ENCODE measurements at regions of chr6 and their contacts with region 1.

Region 1: GRCh38 chr6:90251295-90251992 is 45.2 kb downstream of the BACH2 start:
- DNase-seq: no peak
- H3K4me3 Mint-ChIP-seq: peak overlapping the region; percentile 34
- H3K27ac Mint-ChIP-seq: peak overlapping the region; percentile 90
- H3K4me1 Mint-ChIP-seq: peaks cover 84% of the 10 kb centered on the region
- H3K27me3 Mint-ChIP-seq: peaks cover 2% of the 10 kb centered on the region

Region 2: DNA sequence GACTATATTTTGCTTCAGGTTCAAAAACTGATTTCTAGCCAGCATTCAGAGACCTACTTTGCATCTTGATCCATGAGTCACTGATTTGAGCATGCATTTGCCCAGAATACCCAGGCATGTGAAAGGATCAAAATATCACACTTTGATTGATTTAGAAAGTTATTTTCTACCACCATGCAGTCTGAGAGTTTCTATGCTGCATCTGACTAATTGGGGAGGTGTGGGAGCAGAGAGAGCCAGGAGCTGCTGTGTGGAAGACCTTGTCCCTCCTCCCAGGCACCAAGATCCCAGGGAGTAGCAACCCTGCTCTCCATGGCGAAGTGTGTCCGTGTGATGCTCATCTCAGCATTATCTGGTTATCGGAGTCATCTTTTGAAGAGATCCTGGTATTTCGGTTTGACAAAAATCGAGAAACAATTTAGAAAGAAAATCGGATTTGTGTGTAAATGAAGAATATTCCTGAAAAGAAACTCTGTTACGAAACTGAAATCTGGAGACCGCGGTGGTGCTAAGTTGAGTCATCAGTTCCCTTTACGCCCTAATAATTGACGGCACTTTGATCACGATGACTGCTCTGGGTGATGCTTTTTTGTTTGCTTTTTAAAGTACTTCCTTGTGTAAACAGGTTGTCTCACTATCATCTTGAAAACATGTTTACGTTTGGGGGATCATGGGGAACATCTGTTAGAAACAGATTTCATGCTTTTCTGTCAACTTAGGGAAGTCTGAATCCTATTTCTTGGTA is 148.2 kb before region 1 on chr6:
- intact Hi-C with region 1: loop called (anchors 1 kb)
- DNase-seq: no peak
- H3K4me3 Mint-ChIP-seq: peak overlapping the region; percentile 79
- H3K27ac Mint-ChIP-seq: peak overlapping the region; percentile 88
- H3K4me1 Mint-ChIP-seq: peaks cover 70% of the 10 kb centered on the region
- H3K27me3 Mint-ChIP-seq: no peaks in the 10 kb centered on the region

Region 3: GRCh38 chr6:90202156-90202555 is 49.3 kb before region 1 on chr6:
- intact Hi-C with region 1: loop called (anchors 1 kb)
- DNase-seq: no peak
- H3K4me3 Mint-ChIP-seq: peak overlapping the region; percentile 71
- H3K27ac Mint-ChIP-seq: peak overlapping the region; percentile 85
- H3K4me1 Mint-ChIP-seq: peaks cover 43% of the 10 kb centered on the region
- H3K27me3 Mint-ChIP-seq: no peaks in the 10 kb centered on the region

Region 4: DNA sequence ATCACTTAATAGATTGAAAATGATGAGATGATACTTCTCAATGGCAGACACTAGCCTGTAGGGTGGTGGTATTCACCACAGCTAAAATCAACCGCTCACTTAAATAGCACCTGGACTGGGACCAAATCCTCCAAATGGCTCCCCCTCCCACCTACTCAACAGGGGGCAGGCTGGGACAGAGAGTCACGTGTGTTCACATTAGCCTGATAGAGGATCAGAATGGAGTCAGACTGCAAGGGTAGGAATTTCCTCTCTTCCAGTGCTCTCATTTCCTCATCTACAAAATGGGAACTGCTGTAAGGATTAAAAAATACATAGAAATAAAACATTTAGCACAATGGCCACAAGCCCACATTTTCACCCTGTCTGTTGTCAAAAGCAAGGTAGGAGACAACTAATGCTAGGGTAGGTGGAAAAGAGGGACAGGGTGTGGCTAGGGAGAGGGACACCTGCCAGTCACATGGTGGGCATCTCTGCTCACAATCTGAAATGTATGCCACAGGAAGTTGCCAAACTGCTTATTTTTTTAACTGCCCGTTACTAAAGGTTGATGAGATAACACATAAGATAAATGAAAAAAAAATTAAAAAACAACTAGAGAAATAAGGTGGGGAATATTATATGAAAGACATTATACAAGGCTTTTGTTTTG is 10.1 kb before region 1 on chr6:
- intact Hi-C with region 1: loop called (anchors 1 kb)
- DNase-seq: no peak
- H3K4me3 Mint-ChIP-seq: no peak overlapping the region
- H3K27ac Mint-ChIP-seq: no peak overlapping the region
- H3K4me1 Mint-ChIP-seq: peaks cover 63% of the 10 kb centered on the region
- H3K27me3 Mint-ChIP-seq: no peaks in the 10 kb centered on the region

Region 5: DNA sequence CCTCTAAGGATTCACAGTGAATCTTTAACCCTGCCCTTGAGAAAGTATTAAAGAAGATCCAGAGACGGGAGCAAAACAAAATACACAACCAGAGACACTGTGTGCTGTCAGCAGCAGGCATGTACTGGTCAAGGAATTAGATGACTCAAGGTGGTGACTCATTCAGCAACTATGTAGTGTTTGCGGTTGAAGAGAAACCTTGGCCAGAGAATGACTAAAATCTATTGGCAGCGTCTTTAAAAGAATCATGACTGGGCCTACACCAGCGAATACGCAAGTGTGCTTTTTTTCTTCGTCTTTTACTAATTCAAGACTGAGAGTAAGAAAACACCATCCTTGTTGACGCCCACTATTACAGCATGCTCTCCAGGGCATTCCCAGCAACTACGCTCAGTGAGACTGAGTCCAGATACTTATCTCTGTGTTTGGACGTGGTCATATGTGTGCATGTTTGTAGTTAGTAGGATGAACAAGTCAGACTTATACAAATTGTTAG is 117.6 kb after region 1 on chr6:
- intact Hi-C with region 1: no loop called
- DNase-seq: no peak
- H3K4me3 Mint-ChIP-seq: no peak overlapping the region
- H3K27ac Mint-ChIP-seq: peak overlapping the region; percentile 46
- H3K4me1 Mint-ChIP-seq: peaks cover 22% of the 10 kb centered on the region
- H3K27me3 Mint-ChIP-seq: peaks cover 4% of the 10 kb centered on the region

Region 6: DNA sequence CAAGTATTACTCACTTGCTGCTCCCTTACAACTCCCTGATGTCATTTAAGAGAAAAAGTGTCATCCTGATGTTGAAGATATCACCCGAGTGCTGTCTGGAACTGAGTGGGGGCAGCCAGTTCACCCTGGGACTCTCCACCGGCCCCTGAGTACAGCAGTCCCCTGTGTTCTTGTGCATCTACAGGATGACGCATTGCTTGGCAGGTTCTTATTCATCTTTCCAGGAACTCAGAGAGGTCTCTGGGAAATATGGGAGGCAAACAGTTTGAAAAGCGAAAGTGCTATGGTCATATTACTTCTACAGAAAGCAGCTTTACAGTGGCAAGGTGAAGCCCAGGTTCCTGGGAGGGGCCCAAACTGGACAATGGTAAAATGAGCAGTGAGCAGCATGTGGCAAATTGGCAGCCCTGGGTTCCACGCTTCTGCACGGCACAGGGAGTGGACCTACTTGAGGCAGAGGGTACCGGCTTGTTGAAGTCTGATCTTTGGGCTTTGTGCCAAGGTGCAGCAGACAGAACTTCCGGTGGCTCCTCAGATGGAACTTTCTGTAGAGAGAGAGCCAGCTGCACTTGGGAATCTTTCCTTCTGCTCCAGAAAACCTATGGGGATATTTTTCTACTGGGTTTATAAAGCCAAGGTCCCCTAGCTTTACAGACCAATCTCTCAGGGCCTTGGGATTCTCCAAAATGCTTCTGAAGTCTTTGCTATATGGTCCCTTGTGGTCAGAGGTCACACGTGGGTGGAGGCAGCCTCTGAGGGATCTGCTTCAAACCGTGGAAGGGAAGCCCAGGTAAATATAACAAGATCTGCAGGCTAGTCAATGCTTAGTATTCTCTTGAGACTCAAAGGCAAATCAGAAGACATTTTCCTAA is 207.1 kb after region 1 on chr6:
- intact Hi-C with region 1: loop called (anchors 1 kb)
- DNase-seq: peak; percentile 66
- H3K4me3 Mint-ChIP-seq: peak overlapping the region; percentile 47
- H3K27ac Mint-ChIP-seq: peak overlapping the region; percentile 93
- H3K4me1 Mint-ChIP-seq: peaks cover 65% of the 10 kb centered on the region
- H3K27me3 Mint-ChIP-seq: no peaks in the 10 kb centered on the region

Region 7: GRCh38 chr6:90715093-90715655 is 463.7 kb after region 1 on chr6:
- intact Hi-C with region 1: no loop called
- DNase-seq: no peak
- H3K4me3 Mint-ChIP-seq: no peak overlapping the region
- H3K27ac Mint-ChIP-seq: no peak overlapping the region
- H3K4me1 Mint-ChIP-seq: peaks cover 5% of the 10 kb centered on the region
- H3K27me3 Mint-ChIP-seq: peaks cover 17% of the 10 kb centered on the region